Activated CD4-positive, alpha-beta memory T cell treated with anti-CD3 and anti-CD28 coated beads for 36 hours (primary cell): ENCODE measurements at regions of chr15 and their contacts with region 1.

Region 1: DNA sequence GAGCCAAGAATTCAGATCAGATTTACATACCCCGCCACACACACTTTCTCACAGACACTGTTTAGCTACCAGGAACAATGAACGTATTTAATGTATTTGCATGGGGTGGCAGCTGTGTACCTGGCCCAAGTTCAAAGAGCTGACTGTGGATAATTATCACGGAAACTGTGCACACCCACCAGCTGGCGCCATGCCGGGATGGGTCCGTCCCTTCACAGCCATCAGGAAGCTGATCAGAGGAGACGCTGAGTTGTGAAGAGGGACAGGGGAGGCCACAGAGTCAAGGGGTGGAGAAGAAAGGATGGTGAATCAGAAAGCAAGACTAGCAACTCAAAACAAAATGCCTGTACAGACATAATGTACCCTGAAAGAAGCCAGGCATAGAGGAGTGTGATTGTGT is 13.1 kb upstream of the PLA2G4D start:
- DNase-seq: peak; percentile 87
- H3K4me3 Mint-ChIP-seq: peak overlapping the region; percentile 10
- H3K27ac Mint-ChIP-seq: peak overlapping the region; percentile 11
- H3K4me1 Mint-ChIP-seq: peaks cover 16% of the 10 kb centered on the region
- H3K27me3 Mint-ChIP-seq: peaks cover 23% of the 10 kb centered on the region

Region 2: GRCh38 chr15:42031198-42031915 is 76.1 kb before region 1 on chr15:
- CTCF ChIA-PET with region 1: no interaction called
- POLR2A ChIA-PET with region 1: no interaction called
- intact Hi-C with region 1: no loop called
- DNase-seq: no peak
- H3K4me3 Mint-ChIP-seq: no peak overlapping the region
- H3K27ac Mint-ChIP-seq: no peak overlapping the region
- H3K4me1 Mint-ChIP-seq: peaks cover 14% of the 10 kb centered on the region
- H3K27me3 Mint-ChIP-seq: peaks cover 4% of the 10 kb centered on the region

Region 3: GRCh38 chr15:42094512-42094963 is 12.9 kb before region 1 on chr15 and contains the start of gene PLA2G4D:
- CTCF ChIA-PET with region 1: no interaction called
- POLR2A ChIA-PET with region 1: interaction called, 4 read pairs
- intact Hi-C with region 1: loop called (anchors 2 kb)
- DNase-seq: no peak
- H3K4me3 Mint-ChIP-seq: no peak within 1 kb of the TSS
- H3K27ac Mint-ChIP-seq: no peak within 1 kb of the TSS
- H3K4me1 Mint-ChIP-seq: peaks cover 8% of the 10 kb centered on the region
- H3K27me3 Mint-ChIP-seq: no peaks in the 10 kb centered on the region
- total RNA-seq, gene PLA2G4D: not detected

Region 4: GRCh38 chr15:42193383-42193782 is 85.9 kb after region 1 on chr15:
- CTCF ChIA-PET with region 1: no interaction called
- POLR2A ChIA-PET with region 1: interaction called, 3 read pairs
- intact Hi-C with region 1: loop called (anchors 1 kb)
- DNase-seq: no peak
- H3K4me3 Mint-ChIP-seq: peak overlapping the region; percentile 41
- H3K27ac Mint-ChIP-seq: peak overlapping the region; percentile 83
- H3K4me1 Mint-ChIP-seq: peaks cover 62% of the 10 kb centered on the region
- H3K27me3 Mint-ChIP-seq: no peaks in the 10 kb centered on the region